ENCODE measurements at regions of chr11 and their contacts with region 1.

Region 1: GRCh38 chr11:61816736-61817455 is at the start of gene FADS1:
- DNase-seq: peak; percentile 97
- H3K4me3 ChIP-seq: peak within 1 kb of the TSS; percentile 56 to 86 (median 62)
- H3K27ac ChIP-seq: peak within 1 kb of the TSS; percentile 86
- H3K4me1 ChIP-seq: peaks cover 19% of the 10 kb centered on the region
- H3K27me3 ChIP-seq: no peaks in the 10 kb centered on the region
- CTCF ChIP-seq: peak; percentile 79 to 89
- POLR2A ChIP-seq: peak; percentile 50
- total RNA-seq, gene FADS1: 109 and 110 TPM in 2 replicates

Region 2: GRCh38 chr11:61827571-61828378 is 10.9 kb after region 1 on chr11 and contains the start of gene FADS2:
- CTCF ChIA-PET with region 1: interaction called, 50 read pairs
- POLR2A ChIA-PET with region 1: interaction called, 36 read pairs
- dilution Hi-C with region 1: no loop called
- intact Hi-C with region 1: loop called (anchors 1 kb)
- DNase-seq: peak; percentile 93
- H3K4me3 ChIP-seq: peak within 1 kb of the TSS; percentile 69 to 93 (median 76)
- H3K27ac ChIP-seq: peak within 1 kb of the TSS; percentile 86
- H3K4me1 ChIP-seq: peaks cover 40% of the 10 kb centered on the region
- H3K27me3 ChIP-seq: no peaks in the 10 kb centered on the region
- CTCF ChIP-seq: peak; percentile 12 to 28
- POLR2A ChIP-seq: no peak
- total RNA-seq, gene FADS2: 668 and 694 TPM in 2 replicates

Region 3: DNA sequence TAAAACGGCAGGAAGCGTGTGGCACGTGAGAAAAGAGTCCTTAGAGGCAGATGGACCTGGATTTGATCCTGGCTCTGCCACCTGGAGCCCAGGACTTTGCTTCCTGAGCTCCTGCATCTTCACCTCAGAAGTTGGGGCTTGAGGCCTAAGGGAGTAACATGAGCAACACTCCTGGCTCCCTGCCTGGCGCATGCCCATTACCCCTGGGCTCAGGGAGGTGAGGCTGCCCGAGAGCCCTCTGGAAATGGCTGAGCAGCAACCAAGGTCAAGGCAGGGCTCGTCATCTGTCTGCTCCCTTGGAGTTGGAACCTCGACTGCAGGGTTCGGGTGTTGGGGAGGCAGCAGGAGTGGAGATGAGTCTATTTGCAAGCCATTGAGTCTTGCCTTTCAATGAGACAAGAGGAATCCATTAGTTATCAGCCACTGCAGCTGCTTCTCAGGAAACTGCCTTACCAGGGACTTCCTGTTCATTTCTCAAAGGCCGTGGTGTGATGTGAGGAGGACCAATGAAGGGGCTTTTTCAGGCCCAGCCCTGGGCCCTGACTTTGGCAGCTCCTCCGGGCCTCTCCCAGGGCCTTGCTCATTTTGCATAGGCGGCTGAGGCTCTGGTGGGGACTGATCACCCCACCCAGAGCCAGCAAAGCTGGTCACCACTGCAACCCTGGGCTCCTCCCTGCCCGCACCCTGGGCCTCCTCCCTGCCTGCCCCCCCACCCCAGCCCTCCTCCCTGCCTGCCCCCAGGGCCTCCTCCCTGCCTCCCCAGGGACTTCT is 17.6 kb after region 1 on chr11:
- CTCF ChIA-PET with region 1: interaction called, 50 read pairs
- POLR2A ChIA-PET with region 1: interaction called, 36 read pairs
- dilution Hi-C with region 1: no loop called
- intact Hi-C with region 1: loop called (anchors 1 kb)
- DNase-seq: peak; percentile 88
- H3K4me3 ChIP-seq: no peak overlapping the region
- H3K27ac ChIP-seq: peak overlapping the region; percentile 98
- H3K4me1 ChIP-seq: peaks cover 60% of the 10 kb centered on the region
- H3K27me3 ChIP-seq: no peaks in the 10 kb centered on the region
- CTCF ChIP-seq: no peak
- POLR2A ChIP-seq: peak; percentile 78

Region 4: GRCh38 chr11:61891331-61892084 is 74.6 kb after region 1 on chr11 and contains the start of gene FADS3:
- CTCF ChIA-PET with region 1: no interaction called
- POLR2A ChIA-PET with region 1: no interaction called
- dilution Hi-C with region 1: no loop called
- intact Hi-C with region 1: loop called (anchors 1 kb)
- DNase-seq: peak; percentile 81
- H3K4me3 ChIP-seq: peak within 1 kb of the TSS; percentile 41 to 70 (median 70)
- H3K27ac ChIP-seq: peak within 1 kb of the TSS; percentile 58
- H3K4me1 ChIP-seq: peaks cover 32% of the 10 kb centered on the region
- H3K27me3 ChIP-seq: no peaks in the 10 kb centered on the region
- CTCF ChIP-seq: no peak
- POLR2A ChIP-seq: peak; percentile 78
- total RNA-seq, gene FADS3: 204 and 216 TPM in 2 replicates

Measured in endothelial cell of umbilical vein (primary cell).